Lower leg skin (tissue), 4 donors: ENCODE measurements at regions of chr16 and their contacts with region 1.

Region 1: GRCh38 chr16:14529010-14529669 is 100.9 kb downstream of the PARN start:
- DNase-seq: peak; percentile 79 to 89
- H3K4me3 ChIP-seq: no peak overlapping the region
- CTCF ChIP-seq: peak in 1 of 3 donors; percentile 82
- POLR2A ChIP-seq: no peak

Region 2: GRCh38 chr16:13926464-13926863 is 602.7 kb before region 1 on chr16:
- intact Hi-C with region 1: loop called (anchors 5 kb)
- DNase-seq: no peak
- H3K4me3 ChIP-seq: no peak overlapping the region
- CTCF ChIP-seq: no peak
- POLR2A ChIP-seq: no peak

Region 3: DNA sequence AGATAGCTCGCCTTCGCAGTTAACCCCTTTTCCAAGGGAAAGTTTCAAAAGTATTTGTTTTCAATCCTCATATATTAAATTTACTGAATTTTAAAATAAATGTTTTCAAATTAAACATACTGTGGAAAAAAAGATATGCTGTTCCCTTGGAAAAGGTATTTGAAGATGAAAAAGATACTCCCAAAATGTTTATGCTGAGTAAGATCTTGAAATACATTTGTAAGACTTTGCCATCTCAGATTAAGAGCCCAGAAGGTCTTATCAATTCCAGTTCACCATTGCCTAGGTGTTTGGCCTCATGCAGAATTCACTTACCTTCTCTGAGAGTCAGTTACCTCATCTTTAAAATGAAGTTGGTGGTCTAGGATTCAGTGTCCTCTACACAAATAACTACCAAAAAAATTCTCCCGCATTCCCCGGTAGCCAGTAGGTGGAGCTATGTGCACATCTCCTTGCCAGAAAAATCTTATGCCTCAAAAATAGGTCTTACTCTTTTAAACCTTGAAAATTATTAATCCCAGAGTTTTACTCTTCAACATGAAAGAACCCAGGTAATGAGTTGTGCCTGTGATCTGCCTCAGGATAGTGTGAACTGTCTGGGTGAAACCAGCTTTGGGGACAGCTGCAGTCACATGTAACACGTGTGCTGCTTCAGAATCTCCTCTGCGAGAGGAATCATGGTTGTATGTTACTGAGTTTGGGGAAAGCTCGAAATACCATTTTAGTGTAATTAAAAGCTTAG is 279.7 kb before region 1 on chr16:
- intact Hi-C with region 1: loop called (anchors 5 kb)
- DNase-seq: peak in 1 of 2 donors; percentile 32
- H3K4me3 ChIP-seq: no peak overlapping the region
- CTCF ChIP-seq: no peak
- POLR2A ChIP-seq: no peak

Region 4: DNA sequence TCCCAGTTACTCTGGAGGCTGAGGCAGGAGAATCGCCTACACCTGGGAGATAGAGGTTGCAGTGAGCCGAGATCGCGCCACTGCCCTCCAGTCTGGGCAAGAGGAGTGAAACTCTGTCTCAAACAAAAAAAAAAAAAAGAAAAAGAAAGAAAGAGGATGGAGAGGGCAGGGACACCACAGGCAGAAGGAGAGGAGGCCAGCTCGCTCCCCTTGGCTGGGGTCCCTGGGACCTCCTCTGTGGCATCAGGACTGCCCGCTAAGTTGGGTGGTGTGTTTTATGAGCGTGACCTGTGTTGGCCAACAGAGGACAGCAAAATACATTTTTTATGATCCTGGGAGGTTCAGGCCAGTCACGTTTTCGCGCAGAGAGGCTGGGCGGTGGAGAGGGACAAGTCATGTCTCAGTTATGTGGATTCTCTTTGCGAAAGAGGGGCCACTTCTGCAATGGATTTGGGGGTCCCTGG is 228.4 kb before region 1 on chr16:
- intact Hi-C with region 1: loop called (anchors 2 kb)
- DNase-seq: peak; percentile 81 to 95
- H3K4me3 ChIP-seq: no peak overlapping the region
- CTCF ChIP-seq: peak in 1 of 3 donors; percentile 6
- POLR2A ChIP-seq: no peak

Region 5: DNA sequence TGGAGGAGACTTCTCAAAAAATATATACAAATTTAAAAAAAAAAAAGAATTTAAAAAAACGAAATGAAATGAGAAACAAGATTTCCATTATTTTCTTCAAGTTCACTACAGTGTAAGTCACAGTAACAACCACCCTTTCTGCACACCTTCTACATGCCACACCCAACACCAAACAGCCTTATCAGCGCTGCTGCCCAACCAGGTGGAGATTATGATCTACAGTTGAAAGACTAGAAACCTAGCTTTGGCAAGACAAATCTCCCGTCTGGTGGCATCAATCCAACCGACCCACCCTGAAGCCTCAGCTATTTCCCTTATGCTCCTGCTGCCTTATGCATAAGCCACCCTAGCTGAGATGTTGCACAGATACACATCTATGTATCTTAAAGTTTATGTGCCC is 40.1 kb after region 1 on chr16:
- intact Hi-C with region 1: no loop called
- DNase-seq: no peak
- H3K4me3 ChIP-seq: no peak overlapping the region
- CTCF ChIP-seq: no peak
- POLR2A ChIP-seq: no peak

Region 6: GRCh38 chr16:14600164-14600563 is 71.0 kb after region 1 on chr16:
- intact Hi-C with region 1: no loop called
- DNase-seq: no peak
- H3K4me3 ChIP-seq: no peak overlapping the region
- CTCF ChIP-seq: no peak
- POLR2A ChIP-seq: no peak

Region 7: GRCh38 chr16:15607700-15608396 is 1078.7 kb after region 1 on chr16:
- intact Hi-C with region 1: no loop called
- DNase-seq: no peak
- H3K4me3 ChIP-seq: no peak overlapping the region
- CTCF ChIP-seq: no peak
- POLR2A ChIP-seq: no peak